Adrenal gland (tissue), 19 donors: ENCODE measurements at regions of chr17 and their contacts with region 1.

Region 1: GRCh38 chr17:45197555-45198334 is 23.9 kb upstream of the FMNL1 start:
- DNase-seq: peak; percentile 94 to 97 (median 95)
- H3K4me3 ChIP-seq: no peak overlapping the region
- H3K27ac ChIP-seq: peak overlapping the region in 3 of 5 donors; percentile 1 to 68 (median 42)
- H3K4me1 ChIP-seq: peaks cover 0 to 3% of the 10 kb centered on the region in 2 donors
- H3K27me3 ChIP-seq: no peaks in the 10 kb centered on the region
- CTCF ChIP-seq: peak; percentile 98 to 100 (median 99)
- POLR2A ChIP-seq: peak; percentile 5 to 22

Region 2: DNA sequence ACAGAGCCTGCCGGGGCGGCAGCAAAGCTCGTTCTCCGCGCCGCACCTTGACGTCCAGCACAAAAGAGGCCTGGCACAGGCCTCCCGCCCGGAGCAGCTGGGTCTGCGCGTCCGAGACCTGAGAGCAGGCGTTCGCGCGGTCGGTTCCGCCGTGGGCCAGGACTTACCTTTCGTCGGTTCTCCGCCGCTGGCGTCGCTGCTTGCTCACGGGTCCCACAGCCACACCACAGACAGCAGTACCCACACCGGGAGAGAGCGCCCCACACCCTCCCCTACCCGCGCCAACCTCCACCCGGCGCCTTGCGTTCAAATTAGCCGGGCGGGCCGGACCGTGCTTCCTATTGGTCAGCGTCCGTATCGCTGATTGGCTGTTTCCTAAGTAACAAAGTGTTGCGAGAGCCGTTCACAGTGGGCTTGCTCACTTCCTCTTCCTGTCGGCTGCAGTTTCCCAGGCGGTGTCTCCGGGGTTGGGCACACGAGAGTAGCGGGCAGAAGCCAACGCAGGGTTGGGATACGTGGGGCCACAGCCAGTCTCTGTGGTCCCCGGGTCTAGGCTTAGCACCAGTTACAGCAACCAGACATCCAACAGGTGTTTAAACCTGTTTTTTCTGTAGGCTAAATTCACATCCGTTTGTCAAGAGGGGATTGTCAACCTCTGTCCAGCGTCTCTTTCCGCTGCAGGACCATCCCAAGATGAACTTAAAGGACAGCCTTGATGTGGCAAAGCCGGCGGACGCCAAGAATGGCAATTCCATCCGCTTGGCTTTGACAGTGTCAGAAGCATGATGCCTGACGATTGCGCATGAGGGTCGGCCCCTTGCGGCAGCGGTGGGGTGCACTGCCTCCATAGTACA is 250.1 kb before region 1 on chr17 and contains the start of gene KIF18B:
- intact Hi-C with region 1: no loop called
- DNase-seq: peak; percentile 87 to 94 (median 91)
- H3K4me3 ChIP-seq: peak within 1 kb of the TSS; percentile 25 to 53 (median 44)
- H3K27ac ChIP-seq: peak within 1 kb of the TSS in 1 of 5 donors; percentile 37
- H3K4me1 ChIP-seq: peaks cover 4 to 9% of the 10 kb centered on the region in 2 donors
- H3K27me3 ChIP-seq: peaks cover 3% of the 10 kb centered on the region
- CTCF ChIP-seq: no peak
- POLR2A ChIP-seq: peak in 1 of 2 donors; percentile 49
- total RNA-seq, gene KIF18B: 0.21 to 1.6 (median 0.85) TPM in 8 of 9 donors, not detected in the other

Region 3: GRCh38 chr17:45135192-45135977 is 62.4 kb before region 1 on chr17 and contains the start of gene ACBD4:
- intact Hi-C with region 1: loop called (anchors 5 kb)
- DNase-seq: peak; percentile 95 to 99 (median 97)
- H3K4me3 ChIP-seq: peak within 1 kb of the TSS in 2 of 4 donors; percentile 73 to 86
- H3K27ac ChIP-seq: peak within 1 kb of the TSS in 4 of 5 donors; percentile 29 to 87 (median 75)
- H3K4me1 ChIP-seq: peaks cover 19 to 33% of the 10 kb centered on the region in 2 donors
- H3K27me3 ChIP-seq: no peaks in the 10 kb centered on the region
- CTCF ChIP-seq: peak; percentile 100
- POLR2A ChIP-seq: peak; percentile 22 to 42
- total RNA-seq, gene ACBD4: 6.6 to 30.6 (median 19.1) TPM